Posterior cingulate gyrus (tissue), 11 donors: ENCODE measurements at regions of chr11 and their contacts with region 1.

Region 1: DNA sequence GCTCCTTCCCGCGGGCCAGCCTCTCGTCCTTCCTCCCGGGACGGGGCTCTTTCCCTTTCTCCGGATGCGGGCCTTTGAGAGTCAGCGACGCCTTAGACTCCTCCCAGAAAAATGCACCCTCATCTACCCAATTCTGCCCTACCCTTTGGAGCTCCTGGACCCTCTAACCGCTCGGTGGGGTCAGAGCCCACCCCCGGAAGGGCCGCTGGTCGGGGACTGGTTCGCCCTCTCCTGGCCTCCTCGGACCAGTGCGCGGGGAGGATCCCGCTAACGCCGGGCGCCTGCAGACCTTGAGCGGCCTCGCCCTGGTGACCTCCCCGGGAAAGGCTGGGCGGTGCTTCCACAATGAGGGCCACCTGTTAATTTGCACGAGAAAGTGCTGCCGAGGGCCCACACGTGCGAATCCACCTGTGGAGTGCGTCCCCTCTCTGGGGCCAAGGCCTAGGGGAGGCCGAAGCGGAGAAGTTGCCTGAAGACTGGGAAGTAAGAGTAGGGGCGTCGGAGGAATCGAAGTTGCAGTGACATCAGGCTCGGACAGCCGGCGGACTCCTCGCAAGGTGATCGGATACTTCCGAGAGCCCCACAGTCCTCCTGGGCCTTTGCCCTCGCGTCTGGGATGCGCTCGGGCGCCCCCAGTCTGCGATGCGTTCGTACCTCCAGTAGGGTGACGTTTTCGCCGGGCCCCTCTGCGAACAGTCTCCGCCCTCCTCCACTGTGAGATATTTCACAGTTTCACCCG is 61.5 kb downstream of the ENDOD1 start:
- DNase-seq: peak; percentile 82 to 98 (median 90)

Region 2: DNA sequence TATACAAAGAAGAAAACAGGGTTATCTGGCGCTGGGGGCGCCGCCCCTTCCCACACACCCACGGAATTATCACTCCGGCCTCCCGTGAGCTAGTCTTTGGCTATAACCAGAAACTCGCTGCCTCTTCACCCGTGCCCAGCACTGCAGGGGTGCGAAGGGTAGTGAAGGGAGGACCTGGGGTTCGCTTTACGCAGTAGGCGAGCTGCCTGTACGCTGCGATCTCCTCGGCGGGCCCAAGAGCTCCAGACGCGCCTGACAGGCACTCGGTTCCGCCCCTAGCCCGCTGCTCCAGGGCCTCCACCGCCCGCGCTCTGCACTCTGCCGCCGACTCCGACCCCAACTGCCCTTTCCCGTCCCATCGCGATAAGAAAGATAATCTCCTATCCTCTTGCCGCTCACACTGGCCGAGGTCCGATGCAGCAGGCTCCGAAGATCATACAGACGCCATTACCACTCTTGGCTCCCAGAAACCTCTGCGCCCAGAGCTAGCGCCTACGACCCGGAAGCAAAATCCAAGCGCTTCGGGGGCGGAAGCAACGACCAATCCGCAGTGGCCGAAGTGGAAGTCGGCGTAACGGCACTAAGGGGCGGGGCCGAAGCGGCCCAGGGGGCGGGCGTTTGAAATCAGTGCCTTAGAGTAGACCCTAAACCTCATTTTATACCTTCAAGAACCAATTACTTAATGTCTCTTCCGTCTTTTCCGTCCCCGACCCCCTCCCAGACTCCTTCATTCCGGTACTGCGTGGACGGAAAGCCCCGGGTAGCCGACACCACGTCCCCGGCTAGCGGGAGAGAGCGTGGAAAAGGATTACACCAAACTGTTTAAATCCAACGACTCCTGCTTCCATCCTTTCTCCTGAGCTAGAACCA is 177.8 kb before region 1 on chr11 and contains the starts of genes CWC15 and KDM4D:
- intact Hi-C with region 1: loop called (anchors 2 kb)
- DNase-seq: peak; percentile 92 to 99 (median 96)

Region 3: GRCh38 chr11:95089620-95090542 is 61.2 kb before region 1 on chr11 and contains the start of gene ENDOD1:
- intact Hi-C with region 1: loop called (anchors 10 kb)
- DNase-seq: peak; percentile 74 to 98 (median 80)

Region 4: DNA sequence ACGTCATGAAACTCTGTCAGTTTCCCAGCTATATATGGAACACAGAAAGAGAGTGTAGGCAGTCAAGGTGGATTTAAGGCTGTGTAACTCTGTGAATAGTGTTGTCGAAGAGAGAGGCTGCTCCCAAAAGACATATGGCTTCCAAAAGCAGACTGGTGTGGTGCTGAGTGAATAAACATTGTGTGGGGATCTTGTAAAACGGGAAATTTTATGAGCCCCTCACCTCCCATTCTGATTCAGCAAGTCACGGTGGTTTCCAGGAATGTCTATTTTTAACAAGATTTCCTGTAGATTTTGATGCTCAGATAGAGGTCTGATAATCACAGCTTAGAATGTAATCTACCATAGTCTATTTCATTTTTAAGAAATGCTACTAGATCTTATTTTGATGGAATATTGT is 12.0 kb after region 1 on chr11:
- intact Hi-C with region 1: no loop called
- DNase-seq: no peak

Region 5: GRCh38 chr11:95567685-95568084 is 416.6 kb after region 1 on chr11:
- intact Hi-C with region 1: loop called (anchors 10 kb)
- DNase-seq: no peak

Region 6: DNA sequence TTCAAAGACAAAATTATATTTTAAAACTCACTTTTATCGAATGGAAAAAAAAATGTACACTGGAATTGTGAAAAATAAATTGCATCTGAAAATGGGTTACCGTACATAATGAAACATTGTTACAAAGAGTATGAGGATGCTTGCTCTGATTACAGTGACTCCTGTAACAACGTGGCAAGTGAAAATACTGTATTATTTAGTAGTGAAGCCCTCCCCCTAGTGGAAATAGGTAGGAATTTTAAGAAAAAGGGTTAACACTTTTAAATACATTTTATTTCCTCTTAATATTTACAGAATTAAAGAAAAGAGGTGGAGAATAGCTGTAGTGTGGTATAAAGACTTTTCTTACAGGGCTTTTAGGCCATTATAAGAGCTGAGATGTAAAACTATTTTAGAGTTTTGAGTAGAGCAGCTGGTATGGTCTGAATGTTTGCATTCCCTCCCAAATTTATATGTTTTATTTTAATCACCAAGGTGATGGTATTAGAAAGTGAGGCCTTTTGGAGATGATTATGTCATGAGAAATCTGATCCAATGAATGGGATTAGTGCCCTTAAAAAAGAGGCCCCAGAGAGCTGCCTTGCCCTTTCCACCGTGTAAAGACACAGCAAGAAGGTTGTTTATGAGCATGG is 613.3 kb after region 1 on chr11:
- intact Hi-C with region 1: loop called (anchors 1 kb)
- DNase-seq: no peak